PC-9 (cell line): ENCODE measurements at regions of chr3 and their contacts with region 1.

Region 1: GRCh38 chr3:132145833-132146232 is 111.0 kb upstream of the CPNE4 start:
- DNase-seq: no peak
- H3K4me3 ChIP-seq: no peak overlapping the region
- H3K27ac ChIP-seq: no peak overlapping the region
- H3K4me1 ChIP-seq: no peaks in the 10 kb centered on the region
- H3K27me3 ChIP-seq: no peaks in the 10 kb centered on the region
- CTCF ChIP-seq: no peak

Region 2: GRCh38 chr3:132535575-132536441 is 390.0 kb after region 1 on chr3:
- CTCF ChIA-PET with region 1: interaction called, 10 read pairs
- POLR2A ChIA-PET with region 1: no interaction called
- intact Hi-C with region 1: no loop called
- DNase-seq: peak; percentile 36 to 46
- H3K4me3 ChIP-seq: no peak overlapping the region
- H3K27ac ChIP-seq: no peak overlapping the region
- H3K4me1 ChIP-seq: no peaks in the 10 kb centered on the region
- H3K27me3 ChIP-seq: no peaks in the 10 kb centered on the region
- CTCF ChIP-seq: peak; percentile 84